Colonic mucosa (tissue), 4 donors: ENCODE measurements at regions of chr1 and their contacts with region 1.

Region 1: DNA sequence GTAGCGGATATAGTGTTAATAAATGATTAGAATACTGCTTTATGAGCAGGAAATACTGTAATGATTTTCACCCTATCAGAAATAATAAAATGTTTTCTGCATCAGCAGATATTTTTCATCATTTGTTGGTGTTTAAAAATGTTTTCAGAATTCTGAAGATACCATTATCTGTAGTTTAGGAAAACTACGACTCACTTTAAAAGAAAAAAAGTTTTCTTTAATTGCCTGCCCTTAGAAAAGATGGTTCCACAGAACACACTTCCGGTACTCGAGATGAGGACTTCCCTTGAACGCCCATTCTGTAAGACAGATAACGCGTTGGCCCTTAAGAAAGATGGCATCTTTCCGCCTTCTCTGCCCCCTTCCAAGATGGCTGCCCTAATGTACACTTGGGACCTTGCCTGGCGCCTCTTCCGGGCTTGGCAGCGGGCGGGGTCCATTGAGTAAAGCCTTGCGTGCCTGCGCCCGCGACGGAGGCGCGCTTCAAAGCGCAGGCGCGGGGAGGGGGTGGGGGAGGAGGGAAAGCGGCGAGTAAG is at the start of gene SZRD1:
- DNase-seq: peak; percentile 98
- H3K4me3 ChIP-seq: peak within 1 kb of the TSS; percentile 70
- H3K27ac ChIP-seq: peak within 1 kb of the TSS; percentile 91
- H3K4me1 ChIP-seq: peaks cover 8% of the 10 kb centered on the region
- H3K27me3 ChIP-seq: no peaks in the 10 kb centered on the region
- CTCF ChIP-seq: no peak
- total RNA-seq, gene SZRD1: 119 to 140 TPM

Region 2: GRCh38 chr1:16206547-16207317 is 160.1 kb before region 1 on chr1:
- intact Hi-C with region 1: loop called (anchors 10 kb)
- DNase-seq: peak; percentile 98
- H3K4me3 ChIP-seq: peak overlapping the region; percentile 45
- H3K27ac ChIP-seq: peak overlapping the region; percentile 96
- H3K4me1 ChIP-seq: peaks cover 4% of the 10 kb centered on the region
- H3K27me3 ChIP-seq: no peaks in the 10 kb centered on the region
- CTCF ChIP-seq: no peak